ENCODE measurements at regions of chr17 and their contacts with region 1.

Region 1: GRCh38 chr17:41665566-41666236 is 23.0 kb upstream of the EIF1 start:
- DNase-seq: peak; percentile 98
- ATAC-seq: peak; percentile 75
- H3K4me3 Mint-ChIP-seq: peak overlapping the region; percentile 92
- H3K27ac Mint-ChIP-seq: peak overlapping the region; percentile 99
- H3K4me1 Mint-ChIP-seq: peaks cover 40% of the 10 kb centered on the region
- H3K27me3 Mint-ChIP-seq: no peaks in the 10 kb centered on the region
- CTCF ChIP-seq: peak; percentile 24

Region 2: DNA sequence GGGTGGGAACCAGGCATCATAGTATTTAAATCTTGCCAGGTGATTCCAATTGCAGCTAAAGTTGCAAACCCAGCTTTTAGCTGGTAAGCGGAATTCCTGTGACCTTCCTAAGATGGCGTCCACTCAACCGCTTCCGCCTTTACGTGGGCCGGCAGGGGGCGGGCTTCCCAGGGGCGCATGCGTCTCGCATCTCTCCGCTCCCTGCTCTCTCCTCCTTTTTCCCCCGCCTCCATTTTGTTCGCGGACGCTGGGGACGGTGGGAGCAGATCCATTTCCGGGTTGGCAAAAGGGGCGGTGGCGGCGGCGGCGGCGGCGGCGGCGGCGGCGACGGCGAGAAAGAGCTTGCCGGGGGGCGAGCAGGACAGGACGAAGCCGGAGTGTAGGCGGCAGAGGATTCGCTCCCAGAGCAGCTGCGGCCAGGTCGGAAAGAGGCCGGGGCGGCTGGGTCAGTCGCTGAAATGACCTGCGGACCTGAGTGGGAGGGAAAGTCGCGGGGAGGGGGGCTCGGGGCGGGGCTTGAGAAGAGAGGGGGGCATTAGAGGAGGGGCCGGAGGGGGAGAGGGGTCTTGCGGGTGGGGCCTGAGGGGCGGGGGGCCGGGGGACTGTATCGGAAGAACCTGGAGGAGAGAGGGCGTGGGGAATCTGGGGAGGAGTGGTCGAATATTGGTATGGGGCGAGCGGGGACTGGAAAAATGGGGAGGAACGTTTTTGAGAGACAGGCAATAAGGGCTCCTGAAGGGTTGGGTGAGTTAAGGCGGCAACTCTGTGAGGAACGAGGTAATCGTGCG is 1446.4 kb before region 1 on chr17 and contains the start of gene WIPF2:
- CTCF ChIA-PET with region 1: no interaction called
- POLR2A ChIA-PET with region 1: interaction called, 3 read pairs
- intact Hi-C with region 1: loop called (anchors 5 kb)
- DNase-seq: peak; percentile 92
- ATAC-seq: peak; percentile 88
- H3K4me3 Mint-ChIP-seq: peak within 1 kb of the TSS; percentile 97
- H3K27ac Mint-ChIP-seq: peak within 1 kb of the TSS; percentile 100
- H3K4me1 Mint-ChIP-seq: peaks cover 30% of the 10 kb centered on the region
- H3K27me3 Mint-ChIP-seq: no peaks in the 10 kb centered on the region
- CTCF ChIP-seq: no peak
- total RNA-seq, gene WIPF2: 28.4 and 32.9 TPM in 2 replicates

Region 3: DNA sequence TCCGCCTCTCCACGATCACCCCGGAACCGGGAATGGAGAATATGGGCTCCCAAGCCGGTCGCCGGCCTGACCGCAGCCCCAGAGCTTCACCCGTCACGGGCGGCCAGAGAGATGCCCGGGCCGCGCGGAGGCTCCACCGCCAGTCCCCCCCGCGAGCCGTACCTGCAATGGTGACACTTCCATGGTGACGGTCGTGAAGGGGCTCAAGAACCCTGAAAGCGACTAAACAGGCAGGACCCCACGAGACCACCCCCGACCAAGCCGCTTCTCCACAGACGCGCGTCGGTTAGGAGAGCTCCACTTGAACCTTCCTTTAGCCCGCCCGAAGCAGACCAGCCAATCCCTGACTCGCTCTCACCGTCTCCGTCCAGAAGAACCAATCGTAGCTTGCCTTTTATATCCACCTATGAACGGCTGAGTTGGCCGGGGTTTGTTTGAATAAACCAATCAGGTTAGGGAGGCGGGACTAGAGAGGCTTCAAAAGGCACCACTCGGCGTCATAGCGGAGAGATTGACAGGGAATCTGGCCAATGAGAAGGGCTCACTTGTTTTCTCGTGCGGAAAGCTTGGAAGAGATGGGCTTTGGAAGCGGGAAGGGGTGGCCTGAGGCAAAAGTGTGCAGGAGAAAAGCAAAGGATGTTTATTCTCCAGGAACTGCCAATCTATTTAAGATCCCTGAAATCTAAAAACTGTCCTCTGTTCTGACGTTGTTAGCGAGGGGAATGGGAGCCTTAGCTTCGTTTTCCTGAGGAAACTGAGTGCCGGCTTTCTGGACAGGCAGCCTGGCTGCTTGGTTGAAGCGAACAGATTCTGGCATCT is 1247.9 kb before region 1 on chr17 and contains the start of gene TOP2A:
- CTCF ChIA-PET with region 1: no interaction called
- POLR2A ChIA-PET with region 1: no interaction called
- intact Hi-C with region 1: loop called (anchors 5 kb)
- DNase-seq: peak; percentile 91
- ATAC-seq: peak; percentile 100
- H3K4me3 Mint-ChIP-seq: peak within 1 kb of the TSS; percentile 94
- H3K27ac Mint-ChIP-seq: peak within 1 kb of the TSS; percentile 84
- H3K4me1 Mint-ChIP-seq: peaks cover 23% of the 10 kb centered on the region
- H3K27me3 Mint-ChIP-seq: no peaks in the 10 kb centered on the region
- CTCF ChIP-seq: no peak
- total RNA-seq, gene TOP2A: 5.3 and 6.6 TPM in 2 replicates

Region 4: DNA sequence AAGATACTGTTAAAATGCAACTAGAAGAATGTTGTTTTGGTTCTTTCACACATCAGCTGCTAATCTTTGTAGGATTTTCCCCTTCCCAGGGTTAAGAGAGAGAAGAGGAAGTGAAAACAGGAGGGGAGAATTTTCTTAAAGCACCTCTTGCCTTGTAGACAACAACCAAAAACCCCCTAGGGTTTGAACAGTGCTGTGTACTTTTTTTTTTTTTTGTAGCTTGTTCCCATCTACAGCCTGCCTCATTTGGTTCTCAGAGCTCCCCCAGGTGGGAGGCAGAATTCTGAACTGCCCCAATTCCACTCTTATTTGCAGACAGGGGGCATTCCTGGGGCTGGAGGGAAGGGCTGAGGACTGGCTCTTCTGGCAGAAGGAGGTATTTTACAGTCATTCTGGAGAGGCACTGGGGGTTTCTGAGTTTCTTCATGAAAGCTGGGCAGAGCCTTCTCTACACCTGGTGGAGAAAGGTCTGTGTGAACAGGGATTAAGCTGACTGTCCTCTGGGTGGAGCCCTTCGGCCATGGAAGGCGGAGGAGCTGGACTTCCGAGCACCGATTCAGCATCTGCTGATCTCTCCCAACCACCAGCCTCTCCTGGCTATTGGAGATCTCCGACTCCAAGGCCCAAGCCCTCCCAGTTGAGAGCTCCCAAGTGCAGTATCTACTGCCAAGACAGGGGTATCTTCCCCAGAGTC is 1050.3 kb before region 1 on chr17:
- CTCF ChIA-PET with region 1: interaction called, 12 read pairs
- POLR2A ChIA-PET with region 1: interaction called, 15 read pairs
- intact Hi-C with region 1: loop called (anchors 1 kb)
- DNase-seq: peak; percentile 58
- ATAC-seq: peak; percentile 83
- H3K4me3 Mint-ChIP-seq: peak overlapping the region; percentile 77
- H3K27ac Mint-ChIP-seq: peak overlapping the region; percentile 96
- H3K4me1 Mint-ChIP-seq: peaks cover 81% of the 10 kb centered on the region
- H3K27me3 Mint-ChIP-seq: no peaks in the 10 kb centered on the region
- CTCF ChIP-seq: no peak

Region 5: GRCh38 chr17:40854159-40854814 is 811.4 kb before region 1 on chr17:
- CTCF ChIA-PET with region 1: interaction called, 18 read pairs
- POLR2A ChIA-PET with region 1: interaction called, 3 read pairs
- intact Hi-C with region 1: loop called (anchors 1 kb)
- DNase-seq: no peak
- ATAC-seq: no peak
- H3K4me3 Mint-ChIP-seq: no peak overlapping the region
- H3K27ac Mint-ChIP-seq: no peak overlapping the region
- H3K4me1 Mint-ChIP-seq: no peaks in the 10 kb centered on the region
- H3K27me3 Mint-ChIP-seq: peaks cover 20% of the 10 kb centered on the region
- CTCF ChIP-seq: no peak

Region 6: DNA sequence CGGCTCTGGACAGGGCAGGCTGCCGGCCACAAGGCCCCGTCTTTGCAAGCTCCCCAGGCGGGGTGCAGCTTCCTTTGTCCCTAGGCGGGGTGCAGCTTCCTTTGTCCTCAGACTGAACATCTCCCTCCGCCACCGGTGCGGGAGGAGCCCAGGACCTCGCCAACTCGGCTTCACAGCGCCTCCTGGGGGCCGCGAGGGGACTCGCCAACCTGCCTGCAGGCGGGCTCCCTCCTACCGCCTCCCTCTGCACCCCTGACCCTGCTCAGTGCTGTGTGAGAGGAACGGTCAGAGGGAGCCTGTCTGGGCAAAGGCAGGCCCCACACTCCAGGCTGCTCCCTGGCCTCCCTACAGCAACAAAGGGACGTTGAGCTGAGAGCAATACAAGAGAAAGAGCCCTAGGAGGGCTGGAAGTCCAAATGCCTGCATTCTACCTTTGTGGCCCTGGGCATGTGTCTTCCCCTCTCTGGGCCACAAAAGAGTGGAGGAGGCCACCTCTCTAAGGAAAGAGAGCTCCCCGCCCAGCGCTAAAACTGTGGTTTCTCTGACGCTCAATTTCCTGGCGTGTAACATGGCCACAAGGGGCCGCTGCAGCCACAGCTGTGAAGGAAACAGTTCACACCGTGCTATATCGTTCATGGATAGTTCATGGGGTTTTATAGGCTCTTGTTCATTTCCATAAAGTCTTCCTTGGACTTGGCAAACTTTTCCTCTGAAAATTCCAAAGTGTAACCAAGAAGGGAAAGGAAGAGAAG is 116.7 kb before region 1 on chr17:
- CTCF ChIA-PET with region 1: interaction called, 52 read pairs
- POLR2A ChIA-PET with region 1: interaction called, 6 read pairs
- intact Hi-C with region 1: loop called (anchors 1 kb)
- DNase-seq: peak; percentile 50
- ATAC-seq: peak; percentile 87
- H3K4me3 Mint-ChIP-seq: peak overlapping the region; percentile 44
- H3K27ac Mint-ChIP-seq: no peak overlapping the region
- H3K4me1 Mint-ChIP-seq: peaks cover 8% of the 10 kb centered on the region
- H3K27me3 Mint-ChIP-seq: peaks cover 39% of the 10 kb centered on the region
- CTCF ChIP-seq: no peak

Region 7: GRCh38 chr17:41678907-41679739 is 13.4 kb after region 1 on chr17:
- CTCF ChIA-PET with region 1: interaction called, 25 read pairs
- POLR2A ChIA-PET with region 1: interaction called, 77 read pairs
- intact Hi-C with region 1: loop called (anchors 1 kb)
- DNase-seq: no peak
- ATAC-seq: peak; percentile 57
- H3K4me3 Mint-ChIP-seq: peak overlapping the region; percentile 80
- H3K27ac Mint-ChIP-seq: peak overlapping the region; percentile 91
- H3K4me1 Mint-ChIP-seq: peaks cover 45% of the 10 kb centered on the region
- H3K27me3 Mint-ChIP-seq: no peaks in the 10 kb centered on the region
- CTCF ChIP-seq: no peak

Measured in activated B cell treated with CpG ODN at 0.5 μM for 24 hours (primary cell).